Adrenal gland (tissue), 19 donors: ENCODE measurements at regions of chr15 and their contacts with region 1.

Region 1: GRCh38 chr15:98904544-98904943 is 103.0 kb downstream of the PGPEP1L start:
- DNase-seq: peak; percentile 46 to 70 (median 55)
- H3K4me3 ChIP-seq: no peak overlapping the region
- H3K27ac ChIP-seq: peak overlapping the region in 1 of 5 donors; percentile 52
- H3K4me1 ChIP-seq: peaks cover 0 to 20% of the 10 kb centered on the region in 2 donors
- H3K27me3 ChIP-seq: no peaks in the 10 kb centered on the region
- CTCF ChIP-seq: peak; percentile 34 to 58 (median 56)
- POLR2A ChIP-seq: no peak

Region 2: GRCh38 chr15:98966091-98966787 is 61.7 kb after region 1 on chr15:
- intact Hi-C with region 1: no loop called
- DNase-seq: peak in 1 of 7 donors; percentile 46
- H3K4me3 ChIP-seq: no peak overlapping the region
- H3K27ac ChIP-seq: no peak overlapping the region
- H3K4me1 ChIP-seq: no peaks in the 10 kb centered on the region
- H3K27me3 ChIP-seq: no peaks in the 10 kb centered on the region
- CTCF ChIP-seq: no peak
- POLR2A ChIP-seq: no peak

Region 3: DNA sequence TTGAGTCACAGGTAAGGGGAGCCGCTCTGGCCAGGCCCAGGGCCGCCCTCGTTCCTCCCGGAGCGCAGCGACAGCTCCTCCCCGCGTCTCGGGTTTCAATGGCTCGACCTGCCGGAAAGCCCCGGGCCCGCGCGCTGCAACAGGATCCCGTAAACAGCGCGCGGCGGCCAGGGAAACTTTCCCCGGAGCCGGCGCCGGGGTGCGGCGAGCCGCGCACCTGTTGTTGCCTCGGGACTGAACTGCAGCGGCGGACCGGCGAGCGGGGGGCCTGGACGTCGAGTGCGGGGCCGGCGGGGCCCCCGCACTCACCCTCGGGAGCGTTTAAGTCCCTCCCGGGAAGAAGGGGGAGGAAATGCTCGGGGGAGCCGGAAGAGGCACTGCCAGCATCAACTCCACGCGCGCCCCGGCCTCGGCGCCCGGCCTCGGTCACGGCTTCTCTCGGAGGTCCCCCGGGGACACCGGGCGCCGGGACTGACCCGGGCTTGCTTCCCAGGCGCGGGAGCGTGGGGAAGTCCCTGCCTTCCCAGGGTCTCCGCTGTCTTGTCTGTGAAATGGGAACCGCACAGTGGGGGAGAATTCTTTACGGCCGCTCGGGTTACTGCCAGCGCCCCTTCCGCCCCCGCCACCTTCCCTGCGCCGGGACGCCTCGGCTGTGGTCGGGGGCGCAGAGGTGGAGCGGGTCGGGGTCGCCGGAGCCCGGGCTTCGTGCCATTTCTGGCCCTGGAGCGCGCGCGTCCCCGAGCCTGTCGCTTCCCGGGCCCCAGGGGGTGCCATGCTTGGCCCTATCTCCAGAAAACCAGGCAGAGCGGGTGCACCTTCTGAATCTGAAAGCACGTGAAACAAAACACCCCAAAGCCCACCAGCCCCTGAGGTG is 110.5 kb after region 1 on chr15:
- intact Hi-C with region 1: no loop called
- DNase-seq: peak; percentile 70 to 86 (median 80)
- H3K4me3 ChIP-seq: peak overlapping the region in 3 of 4 donors; percentile 25 to 64 (median 31)
- H3K27ac ChIP-seq: peak overlapping the region in 3 of 5 donors; percentile 31 to 65 (median 39)
- H3K4me1 ChIP-seq: peaks cover 0 to 8% of the 10 kb centered on the region in 2 donors
- H3K27me3 ChIP-seq: no peaks in the 10 kb centered on the region
- CTCF ChIP-seq: no peak
- POLR2A ChIP-seq: peak in 1 of 2 donors; percentile 58

Region 4: DNA sequence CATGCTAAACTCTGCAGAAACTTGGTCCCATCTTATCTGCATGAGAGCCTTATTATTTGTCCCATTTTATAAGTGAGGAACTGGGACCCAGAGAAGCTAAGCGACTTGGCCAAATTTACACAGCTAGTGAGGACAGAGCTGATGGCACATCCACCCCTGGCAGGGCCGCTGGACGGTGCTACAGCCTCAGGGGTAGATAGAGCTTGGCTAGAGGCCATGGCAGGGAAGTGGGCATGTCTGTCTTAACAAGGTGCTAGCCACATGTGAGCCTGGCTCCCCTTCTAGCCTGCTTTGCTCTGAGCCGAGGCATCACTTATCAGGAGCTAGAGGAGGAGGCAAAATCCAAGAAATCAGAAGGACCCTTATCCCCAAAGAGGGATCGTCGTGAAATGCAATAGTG is 163.6 kb after region 1 on chr15:
- intact Hi-C with region 1: loop called in 1 of 2 experiments (anchors 10 kb)
- DNase-seq: peak in 1 of 7 donors; percentile 33
- H3K4me3 ChIP-seq: no peak overlapping the region
- H3K27ac ChIP-seq: no peak overlapping the region
- H3K4me1 ChIP-seq: no peaks in the 10 kb centered on the region
- H3K27me3 ChIP-seq: no peaks in the 10 kb centered on the region
- CTCF ChIP-seq: no peak
- POLR2A ChIP-seq: no peak

Region 5: DNA sequence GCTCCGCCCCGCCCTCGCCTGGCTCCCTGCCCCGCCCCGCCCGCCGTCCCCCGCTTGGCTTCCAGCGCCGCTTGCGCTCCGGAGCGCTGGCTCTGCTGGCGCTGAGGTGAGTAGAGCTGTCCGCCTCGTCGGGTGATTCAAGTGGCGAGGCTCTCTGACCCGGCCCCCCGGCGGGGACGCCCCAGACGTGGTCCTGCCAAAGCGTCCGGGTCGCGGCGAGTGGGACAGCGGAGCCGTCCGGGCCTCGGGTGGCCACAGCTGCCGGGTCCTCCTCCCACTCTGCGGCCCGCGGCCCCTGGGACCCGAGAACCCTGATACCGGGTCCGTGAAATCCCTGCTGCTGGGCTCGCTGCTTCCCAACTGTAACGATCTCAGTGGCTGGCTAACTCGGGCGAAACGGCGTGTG is 346.9 kb after region 1 on chr15 and contains the start of gene LRRC28:
- intact Hi-C with region 1: no loop called
- DNase-seq: no peak
- H3K4me3 ChIP-seq: peak within 1 kb of the TSS; percentile 43 to 92 (median 72)
- H3K27ac ChIP-seq: peak within 1 kb of the TSS; percentile 86 to 96 (median 93)
- H3K4me1 ChIP-seq: peaks cover 17 to 49% of the 10 kb centered on the region in 2 donors
- H3K27me3 ChIP-seq: no peaks in the 10 kb centered on the region
- CTCF ChIP-seq: no peak
- POLR2A ChIP-seq: peak; percentile 65 to 86
- total RNA-seq, gene LRRC28: 17.8 to 49.8 (median 23.5) TPM